B cell (primary cell): ENCODE measurements at regions of chr9 and their contacts with region 1.

Region 1: DNA sequence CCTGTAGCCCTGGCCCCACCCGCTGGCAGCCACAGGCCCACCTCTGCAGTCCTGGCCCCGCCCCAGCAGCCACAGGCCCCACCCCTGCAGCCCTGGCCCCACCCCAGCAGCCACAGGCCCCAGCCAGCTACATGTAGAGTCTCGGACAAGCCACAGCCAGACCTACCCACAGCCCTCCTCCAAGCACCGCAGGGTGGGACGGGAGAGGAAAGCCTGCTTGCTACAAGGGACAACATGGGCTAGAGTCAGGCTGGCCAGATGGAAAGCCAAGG is 49.5 kb upstream of the SARDH start:
- DNase-seq: peak; percentile 70
- ATAC-seq: peak; percentile 73
- H3K4me3 ChIP-seq: peak overlapping the region in 1 of 5 experiments; percentile 23
- H3K4me3 Mint-ChIP-seq: peak overlapping the region; percentile 84
- H3K27ac ChIP-seq: peak overlapping the region; percentile 87 to 95
- H3K27ac Mint-ChIP-seq: peak overlapping the region; percentile 97
- H3K4me1 ChIP-seq: peaks cover 74 to 78% of the 10 kb centered on the region in 2 donors
- H3K4me1 Mint-ChIP-seq: peaks cover 86% of the 10 kb centered on the region
- H3K27me3 ChIP-seq: no peaks in the 10 kb centered on the region
- H3K27me3 Mint-ChIP-seq: no peaks in the 10 kb centered on the region
- CTCF ChIP-seq: no peak

Region 2: GRCh38 chr9:133257465-133257956 is 530.2 kb before region 1 on chr9:
- CTCF ChIA-PET with region 1: no interaction called
- POLR2A ChIA-PET with region 1: no interaction called
- intact Hi-C with region 1: no loop called
- DNase-seq: no peak
- ATAC-seq: no peak
- H3K4me3 ChIP-seq: no peak overlapping the region
- H3K4me3 Mint-ChIP-seq: no peak overlapping the region
- H3K27ac ChIP-seq: no peak overlapping the region
- H3K27ac Mint-ChIP-seq: no peak overlapping the region
- H3K4me1 ChIP-seq: no peaks in the 10 kb centered on the region
- H3K4me1 Mint-ChIP-seq: no peaks in the 10 kb centered on the region
- H3K27me3 ChIP-seq: peaks cover 0 to 24% (median 0%) of the 10 kb centered on the region in 4 experiments
- H3K27me3 Mint-ChIP-seq: peaks cover 22% of the 10 kb centered on the region
- CTCF ChIP-seq: no peak

Region 3: GRCh38 chr9:133742849-133743444 is 44.7 kb before region 1 on chr9:
- CTCF ChIA-PET with region 1: interaction called, 14 read pairs
- POLR2A ChIA-PET with region 1: interaction called, 3 read pairs
- intact Hi-C with region 1: loop called (anchors 5 kb)
- DNase-seq: peak; percentile 82
- ATAC-seq: peak; percentile 91
- H3K4me3 ChIP-seq: no peak overlapping the region
- H3K4me3 Mint-ChIP-seq: no peak overlapping the region
- H3K27ac ChIP-seq: no peak overlapping the region
- H3K27ac Mint-ChIP-seq: no peak overlapping the region
- H3K4me1 ChIP-seq: peaks cover 8 to 11% of the 10 kb centered on the region in 2 donors
- H3K4me1 Mint-ChIP-seq: peaks cover 4% of the 10 kb centered on the region
- H3K27me3 ChIP-seq: peaks cover 0 to 8% (median 2%) of the 10 kb centered on the region in 4 experiments
- H3K27me3 Mint-ChIP-seq: peaks cover 33% of the 10 kb centered on the region
- CTCF ChIP-seq: peak; percentile 97

Region 4: GRCh38 chr9:133821601-133822429 is 34.1 kb after region 1 on chr9:
- CTCF ChIA-PET with region 1: interaction called, 7 read pairs
- POLR2A ChIA-PET with region 1: interaction called, 5 read pairs
- intact Hi-C with region 1: loop called (anchors 1 kb)
- DNase-seq: peak; percentile 83
- ATAC-seq: peak; percentile 56
- H3K4me3 ChIP-seq: peak overlapping the region in 4 of 5 experiments; percentile 31 to 63 (median 40)
- H3K4me3 Mint-ChIP-seq: peak overlapping the region; percentile 88
- H3K27ac ChIP-seq: peak overlapping the region; percentile 99
- H3K27ac Mint-ChIP-seq: peak overlapping the region; percentile 97
- H3K4me1 ChIP-seq: peaks cover 55 to 70% of the 10 kb centered on the region in 2 donors
- H3K4me1 Mint-ChIP-seq: peaks cover 81% of the 10 kb centered on the region
- H3K27me3 ChIP-seq: no peaks in the 10 kb centered on the region
- H3K27me3 Mint-ChIP-seq: no peaks in the 10 kb centered on the region
- CTCF ChIP-seq: no peak

Region 5: DNA sequence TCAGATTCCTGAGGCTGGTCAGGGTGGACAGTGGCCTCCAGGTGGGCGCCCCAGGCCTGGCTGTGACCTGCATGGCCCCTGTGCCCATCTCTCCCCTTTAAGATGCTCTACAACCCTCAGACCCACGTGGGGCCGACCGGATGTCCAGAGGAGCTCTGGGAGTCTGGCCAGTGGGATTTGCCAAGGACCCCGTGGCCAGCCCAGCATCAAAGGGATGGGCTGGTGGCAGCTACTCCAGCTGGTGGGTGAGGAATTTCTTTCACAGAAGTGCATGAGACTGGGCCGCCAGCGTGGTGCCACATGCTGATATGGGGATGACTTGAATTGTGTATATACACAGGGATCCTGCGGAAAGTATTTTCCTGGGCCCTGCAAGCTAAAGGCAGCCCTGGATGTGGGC is 45.2 kb after region 1 on chr9:
- CTCF ChIA-PET with region 1: no interaction called
- POLR2A ChIA-PET with region 1: no interaction called
- intact Hi-C with region 1: no loop called
- DNase-seq: no peak
- ATAC-seq: no peak
- H3K4me3 ChIP-seq: no peak overlapping the region
- H3K4me3 Mint-ChIP-seq: no peak overlapping the region
- H3K27ac ChIP-seq: no peak overlapping the region
- H3K27ac Mint-ChIP-seq: no peak overlapping the region
- H3K4me1 ChIP-seq: peaks cover 0 to 2% of the 10 kb centered on the region in 2 donors
- H3K4me1 Mint-ChIP-seq: peaks cover 28% of the 10 kb centered on the region
- H3K27me3 ChIP-seq: no peaks in the 10 kb centered on the region
- H3K27me3 Mint-ChIP-seq: no peaks in the 10 kb centered on the region
- CTCF ChIP-seq: no peak

Region 6: DNA sequence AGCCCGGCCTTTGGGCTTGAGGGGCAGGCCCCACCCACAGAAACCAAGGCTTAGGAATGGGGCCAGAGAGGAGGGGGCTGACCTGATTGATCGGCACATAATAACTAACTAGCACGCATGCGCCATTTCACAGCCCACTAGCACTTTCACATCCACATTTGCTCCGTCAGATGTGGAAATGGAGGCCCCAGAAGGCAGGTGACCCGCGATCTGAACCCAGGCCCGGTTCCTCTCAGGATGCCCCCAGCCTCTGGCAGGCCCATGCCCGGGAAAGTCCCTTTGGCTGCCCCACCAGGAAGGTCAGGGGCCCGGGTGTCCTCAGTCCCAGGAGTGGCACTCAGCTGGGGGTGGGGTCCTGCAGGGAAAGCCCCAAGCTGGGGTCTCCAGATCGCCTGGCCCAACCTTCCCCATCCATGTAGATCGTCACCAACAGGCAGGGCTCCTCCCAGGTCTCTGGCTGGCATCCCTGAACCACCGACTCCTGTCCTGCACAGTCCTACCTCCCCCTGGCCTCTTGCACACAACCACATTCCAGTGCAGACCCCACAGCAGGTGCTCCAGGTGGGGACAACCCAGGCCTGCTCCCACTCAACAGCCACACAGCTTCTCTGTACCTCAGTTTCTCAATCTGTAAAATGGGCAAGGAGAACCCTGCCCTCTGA is 157.8 kb after region 1 on chr9:
- CTCF ChIA-PET with region 1: interaction called, 8 read pairs
- POLR2A ChIA-PET with region 1: no interaction called
- intact Hi-C with region 1: loop called (anchors 2 kb)
- DNase-seq: peak; percentile 90
- ATAC-seq: peak; percentile 74
- H3K4me3 ChIP-seq: peak overlapping the region in 3 of 5 experiments; percentile 1 to 44 (median 25)
- H3K4me3 Mint-ChIP-seq: peak overlapping the region; percentile 89
- H3K27ac ChIP-seq: peak overlapping the region; percentile 75 to 83
- H3K27ac Mint-ChIP-seq: peak overlapping the region; percentile 97
- H3K4me1 ChIP-seq: peaks cover 34 to 64% of the 10 kb centered on the region in 2 donors
- H3K4me1 Mint-ChIP-seq: peaks cover 78% of the 10 kb centered on the region
- H3K27me3 ChIP-seq: no peaks in the 10 kb centered on the region
- H3K27me3 Mint-ChIP-seq: no peaks in the 10 kb centered on the region
- CTCF ChIP-seq: no peak

Region 7: GRCh38 chr9:134024828-134025605 is 237.3 kb after region 1 on chr9 and contains the start of gene BRD3OS:
- CTCF ChIA-PET with region 1: interaction called, 7 read pairs
- POLR2A ChIA-PET with region 1: interaction called, 6 read pairs
- intact Hi-C with region 1: loop called (anchors 1 kb)
- DNase-seq: peak; percentile 97
- ATAC-seq: peak; percentile 93
- H3K4me3 ChIP-seq: peak within 1 kb of the TSS; percentile 53 to 85 (median 76)
- H3K4me3 Mint-ChIP-seq: peak within 1 kb of the TSS; percentile 86
- H3K27ac ChIP-seq: peak within 1 kb of the TSS; percentile 34 to 69
- H3K27ac Mint-ChIP-seq: peak within 1 kb of the TSS; percentile 88
- H3K4me1 ChIP-seq: peaks cover 6 to 19% of the 10 kb centered on the region in 2 donors
- H3K4me1 Mint-ChIP-seq: peaks cover 11% of the 10 kb centered on the region
- H3K27me3 ChIP-seq: no peaks in the 10 kb centered on the region
- H3K27me3 Mint-ChIP-seq: no peaks in the 10 kb centered on the region
- CTCF ChIP-seq: no peak
- total RNA-seq, gene BRD3OS: 25.3 and 26.8 TPM in 2 replicates